OCI-LY7 (cell line): ENCODE measurements at regions of chr3 and their contacts with region 1.

Region 1: GRCh38 chr3:101527441-101527840 is 14.4 kb upstream of the SENP7 start:
- DNase-seq: no peak
- H3K4me3 ChIP-seq: no peak overlapping the region
- H3K27ac ChIP-seq: no peak overlapping the region
- H3K4me1 ChIP-seq: no peaks in the 10 kb centered on the region
- CTCF ChIP-seq: no peak

Region 2: GRCh38 chr3:101542957-101543356 is 15.5 kb after region 1 on chr3:
- CTCF ChIA-PET with region 1: no interaction called
- POLR2A ChIA-PET with region 1: interaction called, 10 read pairs
- intact Hi-C with region 1: no loop called
- DNase-seq: no peak
- H3K4me3 ChIP-seq: no peak overlapping the region
- H3K27ac ChIP-seq: no peak overlapping the region
- H3K4me1 ChIP-seq: no peaks in the 10 kb centered on the region
- CTCF ChIP-seq: no peak

Region 3: DNA sequence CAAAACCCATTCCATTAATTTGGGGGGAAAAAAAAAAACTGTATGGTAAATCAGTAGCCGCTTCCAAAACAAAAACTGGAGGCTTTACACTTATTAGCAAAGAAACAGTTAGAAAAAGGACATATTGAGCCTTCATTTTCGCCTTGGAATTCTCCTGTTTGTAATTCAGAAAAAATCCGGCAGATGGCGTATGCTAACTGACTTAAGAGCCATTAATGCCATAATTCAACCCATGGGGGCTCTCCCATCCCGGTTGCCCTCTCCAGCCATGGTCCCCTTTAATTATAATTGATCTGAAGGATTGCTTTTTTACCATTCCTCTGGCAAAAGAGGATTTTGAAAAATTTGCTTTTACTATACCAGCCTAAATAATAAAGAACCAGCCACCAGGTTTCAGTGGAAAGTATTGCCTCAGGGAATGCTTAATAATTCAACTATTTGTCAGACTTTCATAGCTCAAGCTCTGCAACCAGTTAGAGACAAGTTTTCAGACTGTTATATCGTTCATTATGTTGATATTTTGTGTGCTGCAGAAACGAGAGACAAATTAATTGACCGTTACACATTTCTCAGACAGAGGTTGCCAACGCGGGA is 168.4 kb after region 1 on chr3:
- CTCF ChIA-PET with region 1: no interaction called
- POLR2A ChIA-PET with region 1: no interaction called
- intact Hi-C with region 1: no loop called
- DNase-seq: peak; percentile 81
- H3K4me3 ChIP-seq: no peak overlapping the region
- H3K27ac ChIP-seq: no peak overlapping the region
- H3K4me1 ChIP-seq: peaks cover 19% of the 10 kb centered on the region
- CTCF ChIP-seq: peak; percentile 87